ENCODE measurements at regions of chr1 and their contacts with region 1.

Region 1: GRCh38 chr1:234309598-234310459 is 63.4 kb upstream of the COA6 start:
- DNase-seq: peak; percentile 70 to 72
- H3K4me3 ChIP-seq: peak overlapping the region; percentile 21
- H3K4me3 Mint-ChIP-seq: peak overlapping the region; percentile 72
- H3K27ac Mint-ChIP-seq: no peak overlapping the region
- H3K4me1 ChIP-seq: peaks cover 5% of the 10 kb centered on the region; the same call in 1 of the 2 replicates
- H3K4me1 Mint-ChIP-seq: no peaks in the 10 kb centered on the region
- H3K27me3 ChIP-seq: no peaks in the 10 kb centered on the region
- H3K27me3 Mint-ChIP-seq: peaks cover 10% of the 10 kb centered on the region
- CTCF ChIP-seq: peak; percentile 96 to 97

Region 2: DNA sequence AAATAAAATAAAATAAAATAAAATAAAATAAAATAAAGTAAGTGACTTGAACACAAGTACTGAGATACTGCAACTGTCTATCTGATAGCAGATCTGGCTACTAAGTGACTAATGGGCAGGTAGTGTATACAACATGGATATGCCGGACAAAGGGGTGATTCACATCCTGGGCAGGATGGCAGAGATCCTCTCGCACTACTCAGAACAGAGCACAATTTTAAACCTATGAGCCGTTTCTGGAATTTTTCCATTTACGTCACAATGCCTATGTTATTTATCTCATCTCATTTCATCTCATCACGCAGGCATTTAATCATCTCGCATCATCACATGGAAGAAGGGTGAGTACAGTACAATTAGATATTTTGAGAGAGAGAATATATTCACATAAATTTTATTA is 169.9 kb before region 1 on chr1:
- CTCF ChIA-PET with region 1: no interaction called
- POLR2A ChIA-PET with region 1: no interaction called
- intact Hi-C with region 1: no loop called
- DNase-seq: no peak
- H3K4me3 ChIP-seq: no peak overlapping the region
- H3K4me3 Mint-ChIP-seq: no peak overlapping the region
- H3K27ac Mint-ChIP-seq: no peak overlapping the region
- H3K4me1 ChIP-seq: no peaks in the 10 kb centered on the region
- H3K4me1 Mint-ChIP-seq: no peaks in the 10 kb centered on the region
- H3K27me3 ChIP-seq: peaks cover 1% of the 10 kb centered on the region; the same call in 1 of the 2 replicates
- H3K27me3 Mint-ChIP-seq: peaks cover 26% of the 10 kb centered on the region
- CTCF ChIP-seq: no peak

Region 3: GRCh38 chr1:234154320-234155251 is 155.2 kb before region 1 on chr1:
- CTCF ChIA-PET with region 1: no interaction called
- POLR2A ChIA-PET with region 1: no interaction called
- intact Hi-C with region 1: loop called (anchors 1 kb)
- DNase-seq: peak in 1 of 2 experiments; percentile 69
- H3K4me3 ChIP-seq: no peak overlapping the region
- H3K4me3 Mint-ChIP-seq: no peak overlapping the region
- H3K27ac Mint-ChIP-seq: no peak overlapping the region
- H3K4me1 ChIP-seq: no peaks in the 10 kb centered on the region
- H3K4me1 Mint-ChIP-seq: peaks cover 11% of the 10 kb centered on the region
- H3K27me3 ChIP-seq: no peaks in the 10 kb centered on the region
- H3K27me3 Mint-ChIP-seq: peaks cover 9% of the 10 kb centered on the region
- CTCF ChIP-seq: peak; percentile 68 to 73

Region 4: DNA sequence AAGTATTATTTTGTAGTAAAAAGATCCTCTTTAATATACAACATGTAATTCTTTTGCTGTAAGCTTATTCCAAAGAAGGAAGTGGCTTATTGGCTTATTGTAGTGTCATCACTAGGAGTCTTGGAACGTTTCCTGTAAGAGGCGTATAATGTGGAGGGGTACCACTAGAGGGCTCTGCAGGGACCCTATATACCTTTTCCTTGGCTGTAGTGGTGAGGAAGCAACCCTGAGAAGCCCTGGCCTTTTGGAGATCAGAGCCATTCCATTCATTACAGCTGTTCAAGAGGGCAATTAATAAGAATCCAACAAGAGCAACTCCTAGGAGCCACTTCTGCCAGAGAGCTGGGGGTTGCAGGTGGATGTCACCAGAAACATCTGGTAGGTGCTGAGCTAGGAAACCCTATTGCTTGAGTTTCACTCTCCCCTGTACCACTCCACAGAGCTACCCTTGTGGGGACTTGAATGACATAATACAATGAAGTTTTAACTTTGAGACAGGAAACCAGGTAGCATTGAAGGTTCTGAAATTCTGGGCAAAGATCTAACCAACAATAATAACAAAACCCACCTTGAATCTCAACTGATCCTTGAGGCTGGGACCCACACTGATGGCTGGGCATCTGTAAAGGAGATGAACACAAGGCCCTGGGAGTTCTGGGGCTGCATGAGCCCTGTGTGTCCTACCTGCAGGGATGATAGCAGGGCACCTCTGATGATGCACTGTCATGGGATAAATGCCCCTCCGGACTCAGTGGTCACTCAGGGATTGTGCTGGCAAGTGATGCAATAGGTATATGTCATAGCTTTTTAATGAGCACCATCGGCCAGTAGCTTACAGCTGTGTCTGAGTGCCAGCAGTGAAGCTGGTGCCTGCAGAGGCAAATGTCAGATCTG is 96.8 kb before region 1 on chr1:
- CTCF ChIA-PET with region 1: interaction called, 4 read pairs
- POLR2A ChIA-PET with region 1: no interaction called
- intact Hi-C with region 1: loop called (anchors 1 kb)
- DNase-seq: peak in 1 of 2 experiments; percentile 25
- H3K4me3 ChIP-seq: no peak overlapping the region
- H3K4me3 Mint-ChIP-seq: no peak overlapping the region
- H3K27ac Mint-ChIP-seq: no peak overlapping the region
- H3K4me1 ChIP-seq: no peaks in the 10 kb centered on the region
- H3K4me1 Mint-ChIP-seq: no peaks in the 10 kb centered on the region
- H3K27me3 ChIP-seq: peaks cover 7% of the 10 kb centered on the region
- H3K27me3 Mint-ChIP-seq: peaks cover 20% of the 10 kb centered on the region
- CTCF ChIP-seq: peak; percentile 10 to 42

Region 5: GRCh38 chr1:234272656-234273312 is 37.0 kb before region 1 on chr1:
- CTCF ChIA-PET with region 1: no interaction called
- POLR2A ChIA-PET with region 1: no interaction called
- intact Hi-C with region 1: no loop called
- DNase-seq: no peak
- H3K4me3 ChIP-seq: no peak overlapping the region
- H3K4me3 Mint-ChIP-seq: no peak overlapping the region
- H3K27ac Mint-ChIP-seq: no peak overlapping the region
- H3K4me1 ChIP-seq: no peaks in the 10 kb centered on the region
- H3K4me1 Mint-ChIP-seq: no peaks in the 10 kb centered on the region
- H3K27me3 ChIP-seq: no peaks in the 10 kb centered on the region; the same call in 1 of the 2 replicates
- H3K27me3 Mint-ChIP-seq: peaks cover 34% of the 10 kb centered on the region
- CTCF ChIP-seq: no peak

Region 6: DNA sequence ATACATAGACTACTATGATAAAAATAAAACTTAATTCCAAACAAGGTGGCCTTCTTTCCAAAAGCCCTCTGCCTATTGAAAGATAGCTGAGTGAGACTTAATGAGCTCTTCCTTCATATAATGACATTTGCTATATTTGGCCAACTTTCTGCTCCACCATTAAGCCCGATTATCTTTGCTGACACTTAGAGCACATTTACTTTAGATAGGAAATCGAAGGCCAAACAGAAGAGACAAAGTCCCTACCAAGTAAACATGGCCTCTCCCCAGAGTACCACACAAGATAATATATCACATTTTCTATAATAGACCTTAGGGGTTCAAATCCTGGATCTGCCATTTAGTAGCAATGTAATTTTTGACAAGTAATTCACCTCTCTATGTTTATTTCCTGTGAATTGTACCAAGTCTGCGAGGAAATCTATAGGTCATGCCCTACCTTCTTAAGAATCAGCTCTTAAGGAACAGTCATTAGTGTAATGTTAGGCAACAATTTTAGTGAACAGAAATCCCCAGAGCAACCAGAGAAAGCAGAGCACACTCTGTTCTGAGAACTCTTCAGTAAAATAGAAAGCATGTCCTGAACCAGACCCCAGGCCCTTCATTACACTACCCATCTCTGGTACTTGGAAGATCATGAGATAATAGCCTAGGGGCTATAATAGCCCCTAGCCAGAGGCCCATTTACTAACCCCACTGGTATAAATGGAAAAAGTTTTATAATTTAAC is 46.1 kb after region 1 on chr1:
- CTCF ChIA-PET with region 1: no interaction called
- POLR2A ChIA-PET with region 1: no interaction called
- intact Hi-C with region 1: no loop called
- DNase-seq: no peak
- H3K4me3 ChIP-seq: peak overlapping the region; percentile 71; the same call in 1 of the 2 replicates
- H3K4me3 Mint-ChIP-seq: peak overlapping the region; percentile 77
- H3K27ac Mint-ChIP-seq: peak overlapping the region; percentile 50
- H3K4me1 ChIP-seq: peaks cover 3% of the 10 kb centered on the region; the same call in 1 of the 2 replicates
- H3K4me1 Mint-ChIP-seq: no peaks in the 10 kb centered on the region
- H3K27me3 ChIP-seq: no peaks in the 10 kb centered on the region
- H3K27me3 Mint-ChIP-seq: peaks cover 11% of the 10 kb centered on the region
- CTCF ChIP-seq: no peak